ENCODE measurements at regions of chr1 and their contacts with region 1.

Region 1: GRCh38 chr1:149962123-149962548 is 25.5 kb upstream of the MTMR11 start:
- DNase-seq: peak; percentile 9
- H3K4me3 ChIP-seq: no peak overlapping the region
- H3K27ac ChIP-seq: peak overlapping the region; percentile 24 to 71 (median 36)
- H3K4me1 ChIP-seq: peaks cover 0 to 31% (median 3%) of the 10 kb centered on the region in 3 donors
- H3K27me3 ChIP-seq: no peaks in the 10 kb centered on the region
- CTCF ChIP-seq: peak; percentile 58 to 87 (median 82)
- POLR2A ChIP-seq: no peak

Region 2: DNA sequence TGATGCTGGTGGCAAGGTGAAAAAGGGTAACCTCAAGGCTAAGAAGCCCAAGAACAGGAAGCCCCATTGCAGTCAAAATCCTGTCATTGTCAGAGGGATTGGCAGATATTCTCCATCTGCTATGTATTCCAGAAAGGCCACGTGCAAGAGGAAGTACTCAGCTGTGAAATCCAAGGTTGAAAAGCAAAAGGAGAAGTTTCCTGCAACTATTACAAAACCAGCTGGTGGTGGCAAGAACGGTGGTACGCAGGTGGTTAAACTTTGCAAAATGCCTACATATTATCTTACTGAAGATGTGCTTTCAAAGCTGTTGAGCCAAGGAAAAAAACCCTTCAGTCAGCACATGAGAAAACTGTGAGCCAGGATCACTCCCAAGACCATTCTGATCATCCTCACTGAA is 91.8 kb after region 1 on chr1:
- intact Hi-C with region 1: loop called (anchors 5 kb)
- DNase-seq: no peak
- H3K4me3 ChIP-seq: no peak overlapping the region
- H3K27ac ChIP-seq: no peak overlapping the region
- H3K4me1 ChIP-seq: peaks cover 0 to 7% (median 0%) of the 10 kb centered on the region in 3 donors
- H3K27me3 ChIP-seq: no peaks in the 10 kb centered on the region
- CTCF ChIP-seq: no peak
- POLR2A ChIP-seq: no peak

Region 3: GRCh38 chr1:150186789-150187559 is 224.8 kb after region 1 on chr1:
- intact Hi-C with region 1: loop called (anchors 10 kb)
- DNase-seq: no peak
- H3K4me3 ChIP-seq: peak overlapping the region in 1 of 4 donors; percentile 24
- H3K27ac ChIP-seq: peak overlapping the region in 2 of 4 donors; percentile 19 to 69
- H3K4me1 ChIP-seq: peaks cover 0 to 14% (median 0%) of the 10 kb centered on the region in 3 donors
- H3K27me3 ChIP-seq: peaks cover 0 to 12% (median 0%) of the 10 kb centered on the region in 4 donors
- CTCF ChIP-seq: peak; percentile 38 to 56 (median 45)
- POLR2A ChIP-seq: no peak